CD8-positive, alpha-beta T cell (primary cell): ENCODE measurements at regions of chr14 and their contacts with region 1.

Region 1: DNA sequence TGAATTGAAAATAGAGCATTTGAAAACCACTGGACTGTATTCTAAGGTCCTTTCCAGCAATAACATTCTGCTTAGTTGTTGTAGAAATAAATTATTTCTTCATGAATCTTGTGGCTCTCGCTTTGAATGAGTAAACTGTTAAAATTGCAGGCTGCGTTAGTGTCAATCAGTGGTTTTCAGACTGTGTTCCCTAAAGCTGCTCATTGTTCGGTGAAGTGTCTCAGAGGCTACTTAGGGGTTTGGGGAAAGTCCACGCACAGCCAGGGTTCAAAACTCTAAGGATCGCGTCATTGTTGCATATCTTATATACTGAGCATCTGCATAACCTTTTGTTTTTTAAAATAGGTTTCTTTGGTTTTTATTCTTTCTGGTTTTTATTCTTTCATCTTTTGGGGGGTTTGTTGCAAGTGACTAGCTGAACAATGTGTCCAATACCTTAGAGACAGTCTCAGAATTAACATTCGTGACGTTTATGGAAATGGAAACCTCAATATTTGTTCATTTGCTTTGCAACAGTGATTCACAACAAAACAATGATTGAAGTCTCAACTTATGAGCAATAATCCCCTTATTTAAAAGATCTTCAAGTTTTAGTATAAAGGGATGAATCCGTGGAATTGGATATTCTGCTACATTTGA is 108.1 kb downstream of the TTLL5 start:
- DNase-seq: no peak
- ATAC-seq: no peak
- H3K4me3 ChIP-seq: no peak overlapping the region
- H3K4me3 Mint-ChIP-seq: no peak overlapping the region
- H3K27ac ChIP-seq: no peak overlapping the region
- H3K27ac Mint-ChIP-seq: no peak overlapping the region
- H3K4me1 ChIP-seq: no peaks in the 10 kb centered on the region
- H3K4me1 Mint-ChIP-seq: no peaks in the 10 kb centered on the region
- H3K27me3 ChIP-seq: no peaks in the 10 kb centered on the region
- H3K27me3 Mint-ChIP-seq: no peaks in the 10 kb centered on the region
- CTCF ChIP-seq: no peak

Region 2: GRCh38 chr14:75711104-75711795 is 57.9 kb before region 1 on chr14:
- CTCF ChIA-PET with region 1: no interaction called
- POLR2A ChIA-PET with region 1: no interaction called
- intact Hi-C with region 1: no loop called
- DNase-seq: peak in 3 of 9 experiments; percentile 9 to 35 (median 17)
- ATAC-seq: peak; percentile 29
- H3K4me3 ChIP-seq: no peak overlapping the region
- H3K4me3 Mint-ChIP-seq: no peak overlapping the region
- H3K27ac ChIP-seq: no peak overlapping the region
- H3K27ac Mint-ChIP-seq: no peak overlapping the region
- H3K4me1 ChIP-seq: no peaks in the 10 kb centered on the region
- H3K4me1 Mint-ChIP-seq: no peaks in the 10 kb centered on the region
- H3K27me3 ChIP-seq: no peaks in the 10 kb centered on the region
- H3K27me3 Mint-ChIP-seq: no peaks in the 10 kb centered on the region
- CTCF ChIP-seq: peak; percentile 33

Region 3: DNA sequence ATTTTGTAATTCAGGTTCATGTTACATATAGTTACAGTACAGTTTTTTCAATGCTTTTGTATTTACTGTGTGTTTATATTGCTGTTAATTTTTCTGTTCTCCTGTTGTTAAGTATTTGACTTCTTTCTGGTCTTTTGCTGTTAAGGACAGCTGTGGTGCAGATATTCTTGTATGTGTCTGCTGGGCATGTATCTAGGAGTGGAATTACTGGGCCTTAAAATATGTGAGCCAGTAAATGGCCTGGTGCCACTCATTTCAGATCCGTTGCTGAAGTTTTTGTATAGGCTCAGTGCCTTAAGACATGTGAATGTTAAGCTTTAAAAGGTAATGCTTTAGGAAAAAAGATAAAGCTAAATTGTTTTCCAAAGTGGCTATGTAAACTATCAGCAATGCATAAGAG is 20.8 kb before region 1 on chr14:
- CTCF ChIA-PET with region 1: no interaction called
- POLR2A ChIA-PET with region 1: no interaction called
- intact Hi-C with region 1: no loop called
- DNase-seq: no peak
- ATAC-seq: no peak
- H3K4me3 ChIP-seq: no peak overlapping the region
- H3K4me3 Mint-ChIP-seq: no peak overlapping the region
- H3K27ac ChIP-seq: no peak overlapping the region
- H3K27ac Mint-ChIP-seq: no peak overlapping the region
- H3K4me1 ChIP-seq: no peaks in the 10 kb centered on the region
- H3K4me1 Mint-ChIP-seq: no peaks in the 10 kb centered on the region
- H3K27me3 ChIP-seq: no peaks in the 10 kb centered on the region
- H3K27me3 Mint-ChIP-seq: no peaks in the 10 kb centered on the region
- CTCF ChIP-seq: no peak

Region 4: GRCh38 chr14:76752744-76753143 is 983.6 kb after region 1 on chr14:
- CTCF ChIA-PET with region 1: no interaction called
- POLR2A ChIA-PET with region 1: no interaction called
- intact Hi-C with region 1: loop called in 1 of 2 experiments (anchors 5 kb)
- DNase-seq: no peak
- ATAC-seq: no peak
- H3K4me3 ChIP-seq: no peak overlapping the region
- H3K4me3 Mint-ChIP-seq: no peak overlapping the region
- H3K27ac ChIP-seq: no peak overlapping the region
- H3K27ac Mint-ChIP-seq: no peak overlapping the region
- H3K4me1 ChIP-seq: no peaks in the 10 kb centered on the region
- H3K4me1 Mint-ChIP-seq: no peaks in the 10 kb centered on the region
- H3K27me3 ChIP-seq: no peaks in the 10 kb centered on the region
- H3K27me3 Mint-ChIP-seq: peaks cover 2% of the 10 kb centered on the region
- CTCF ChIP-seq: no peak